Right ventricle myocardium inferior (tissue), 1 donor: ENCODE measurements at regions of chr7 and their contacts with region 1.

Region 1: GRCh38 chr7:104231054-104232046 is 23.5 kb upstream of the ORC5 start:
- DNase-seq: no peak
- ATAC-seq: peak; percentile 65

Region 2: GRCh38 chr7:104453190-104453589 is 221.8 kb after region 1 on chr7:
- intact Hi-C with region 1: no loop called
- DNase-seq: no peak
- ATAC-seq: no peak

Region 3: GRCh38 chr7:104848138-104848990 is 617.0 kb after region 1 on chr7:
- intact Hi-C with region 1: loop called (anchors 2 kb)
- DNase-seq: no peak
- ATAC-seq: peak; percentile 50